ENCODE measurements at regions of chr13 and their contacts with region 1.

Region 1: DNA sequence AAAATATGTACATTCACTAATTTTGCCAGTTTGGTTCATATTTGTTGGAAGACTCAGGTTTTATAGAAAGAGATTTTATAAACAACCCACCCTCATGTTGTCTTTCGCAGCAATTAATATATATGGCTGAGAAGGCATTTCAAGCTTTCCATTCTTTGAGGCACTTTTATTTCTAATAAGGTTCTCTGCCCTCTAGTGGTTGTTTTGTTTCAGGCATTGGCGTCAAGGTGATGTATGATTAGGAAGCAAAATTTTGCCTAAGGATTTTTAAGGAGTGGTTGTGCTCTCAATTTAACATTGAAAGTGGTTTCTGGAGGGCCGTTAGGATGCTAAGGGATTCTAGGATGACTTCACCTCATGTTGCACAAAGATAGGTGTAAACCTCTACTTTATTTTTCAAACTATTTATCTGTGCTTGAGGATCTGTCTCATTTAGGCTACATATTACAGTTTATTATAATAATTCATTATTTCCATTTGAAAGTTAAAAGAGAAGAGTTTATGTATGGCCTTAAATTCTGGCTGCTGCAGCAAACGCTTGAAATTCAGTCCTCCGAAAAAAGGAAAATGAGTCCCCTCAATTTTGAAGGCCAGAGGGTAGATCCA is 35.9 kb downstream of the OXGR1 start:
- DNase-seq: peak; percentile 13 to 20
- H3K4me3 ChIP-seq: no peak overlapping the region
- H3K27ac ChIP-seq: no peak overlapping the region
- H3K4me1 ChIP-seq: peaks cover 0 to 7% of the 10 kb centered on the region in 2 donors
- H3K27me3 ChIP-seq: no peaks in the 10 kb centered on the region
- CTCF ChIP-seq: peak; percentile 30 to 74 (median 64)
- POLR2A ChIP-seq: no peak

Region 2: DNA sequence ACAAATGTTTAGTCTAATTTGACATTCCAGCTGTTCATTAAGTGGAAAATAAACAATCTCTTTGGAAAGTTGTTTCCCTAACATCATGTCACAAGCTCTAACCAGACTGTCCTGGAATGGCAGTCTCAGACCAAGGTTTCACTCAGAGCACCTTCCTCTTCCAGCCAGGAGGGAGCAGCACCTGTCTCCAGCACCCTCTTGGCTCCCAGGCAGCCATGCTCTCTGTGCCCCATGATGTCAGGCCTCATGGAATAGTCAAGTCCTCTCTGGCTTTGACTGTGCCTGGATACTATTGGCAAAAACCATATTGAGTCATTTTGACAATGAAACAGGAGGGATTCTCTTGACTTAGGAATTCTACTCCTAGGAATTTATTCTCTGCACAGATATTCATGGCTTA is 135.5 kb before region 1 on chr13:
- intact Hi-C with region 1: loop called (anchors 10 kb)
- DNase-seq: peak; percentile 65 to 76
- H3K4me3 ChIP-seq: no peak overlapping the region
- H3K27ac ChIP-seq: no peak overlapping the region
- H3K4me1 ChIP-seq: peaks cover 0 to 10% of the 10 kb centered on the region in 2 donors
- H3K27me3 ChIP-seq: no peaks in the 10 kb centered on the region
- CTCF ChIP-seq: peak in 5 of 6 experiments; percentile 21 to 71 (median 63)
- POLR2A ChIP-seq: no peak

Measured in thyroid gland (tissue), 4 donors.